ENCODE measurements at regions of chr1 and their contacts with region 1.

Region 1: DNA sequence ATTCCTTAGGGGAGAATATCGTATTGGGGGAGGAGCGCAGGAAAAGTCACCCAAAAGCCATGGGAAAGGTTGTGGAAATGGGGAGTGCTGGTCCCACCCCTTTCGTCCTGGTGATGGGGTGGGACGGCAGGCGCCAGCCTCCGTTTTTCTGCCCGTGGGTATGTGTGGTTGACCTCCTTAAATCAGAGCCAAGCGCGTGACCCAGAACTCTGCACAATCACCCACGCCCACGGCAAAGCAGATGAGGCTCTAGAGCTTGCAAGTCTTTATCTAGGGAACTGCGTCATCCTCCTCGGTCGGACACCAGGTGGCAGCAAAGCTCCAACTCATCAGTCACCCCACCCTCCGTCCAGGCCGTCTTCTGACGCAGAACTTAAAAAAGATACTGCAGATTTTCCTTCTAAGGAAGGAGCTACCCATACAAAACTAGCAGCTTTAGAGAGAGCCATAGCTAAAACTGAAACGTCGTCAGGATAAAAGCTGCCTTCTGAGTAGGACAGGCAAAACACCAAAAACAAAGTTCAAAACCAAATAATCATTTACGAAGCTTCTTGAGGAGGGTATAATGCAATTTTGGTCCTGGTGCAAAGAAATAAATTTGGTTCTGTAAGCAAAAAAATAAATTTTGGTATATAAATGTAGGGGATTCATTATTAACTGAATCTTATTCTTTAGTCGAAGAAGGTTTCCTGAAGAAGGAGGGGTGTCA is 62.0 kb downstream of the TBX19 start:
- H3K4me3 Mint-ChIP-seq: peak overlapping the region; percentile 53
- H3K27ac Mint-ChIP-seq: peak overlapping the region; percentile 32
- H3K4me1 Mint-ChIP-seq: peaks cover 28% of the 10 kb centered on the region
- H3K27me3 Mint-ChIP-seq: no peaks in the 10 kb centered on the region

Region 2: GRCh38 chr1:168386949-168387586 is 44.3 kb after region 1 on chr1:
- intact Hi-C with region 1: no loop called
- H3K4me3 Mint-ChIP-seq: peak overlapping the region; percentile 35
- H3K27ac Mint-ChIP-seq: no peak overlapping the region
- H3K4me1 Mint-ChIP-seq: peaks cover 5% of the 10 kb centered on the region
- H3K27me3 Mint-ChIP-seq: peaks cover 9% of the 10 kb centered on the region

Region 3: DNA sequence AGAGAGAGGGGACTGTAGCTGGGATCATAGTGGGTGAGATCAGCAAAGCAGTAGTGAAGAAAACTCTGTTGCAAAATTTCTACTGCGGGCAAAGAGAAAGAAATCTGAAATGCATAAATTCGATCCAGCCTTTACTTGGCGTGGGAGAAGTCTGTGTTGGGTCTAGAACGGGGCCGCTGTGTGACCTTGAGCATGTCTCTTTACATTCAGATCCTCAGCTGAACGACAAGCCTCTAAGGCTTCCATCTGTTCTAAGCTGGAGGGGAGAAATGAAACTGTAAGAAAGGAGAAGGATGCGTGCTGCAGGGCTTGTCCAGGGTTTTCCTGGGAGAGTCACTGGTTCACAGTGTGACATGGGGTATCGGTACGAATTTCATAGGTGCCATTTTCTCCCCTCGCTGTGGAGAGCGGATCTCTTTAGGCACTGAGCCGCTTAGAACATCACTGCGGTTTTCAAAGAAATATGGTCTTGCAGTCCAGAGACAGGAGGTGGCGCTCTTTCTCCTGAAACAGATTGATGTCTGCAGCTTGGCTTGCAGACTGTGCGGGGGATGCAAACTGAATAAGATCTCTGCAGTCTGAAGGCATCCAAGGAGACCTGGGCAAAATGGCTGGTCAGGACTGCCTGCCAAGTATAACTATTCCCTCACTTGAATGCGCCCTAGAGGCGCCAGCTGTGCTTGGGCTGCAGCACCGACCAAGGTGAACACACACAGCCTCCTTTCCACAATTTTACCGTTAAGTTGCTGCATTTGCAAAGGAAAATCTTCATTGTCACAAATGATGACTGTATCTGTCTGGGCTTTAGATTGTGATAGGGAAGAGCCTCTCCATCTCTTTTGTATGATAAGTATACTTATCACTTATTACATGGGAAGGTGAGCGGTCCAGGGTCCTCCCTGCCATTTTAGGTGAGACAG is 97.0 kb after region 1 on chr1:
- intact Hi-C with region 1: loop called (anchors 1 kb)
- H3K4me3 Mint-ChIP-seq: peak overlapping the region; percentile 45
- H3K27ac Mint-ChIP-seq: no peak overlapping the region
- H3K4me1 Mint-ChIP-seq: peaks cover 11% of the 10 kb centered on the region
- H3K27me3 Mint-ChIP-seq: no peaks in the 10 kb centered on the region

Region 4: GRCh38 chr1:168572633-168573032 is 229.9 kb after region 1 on chr1:
- intact Hi-C with region 1: loop called (anchors 2 kb)
- H3K4me3 Mint-ChIP-seq: no peak overlapping the region
- H3K27ac Mint-ChIP-seq: no peak overlapping the region
- H3K4me1 Mint-ChIP-seq: no peaks in the 10 kb centered on the region
- H3K27me3 Mint-ChIP-seq: no peaks in the 10 kb centered on the region

Region 5: DNA sequence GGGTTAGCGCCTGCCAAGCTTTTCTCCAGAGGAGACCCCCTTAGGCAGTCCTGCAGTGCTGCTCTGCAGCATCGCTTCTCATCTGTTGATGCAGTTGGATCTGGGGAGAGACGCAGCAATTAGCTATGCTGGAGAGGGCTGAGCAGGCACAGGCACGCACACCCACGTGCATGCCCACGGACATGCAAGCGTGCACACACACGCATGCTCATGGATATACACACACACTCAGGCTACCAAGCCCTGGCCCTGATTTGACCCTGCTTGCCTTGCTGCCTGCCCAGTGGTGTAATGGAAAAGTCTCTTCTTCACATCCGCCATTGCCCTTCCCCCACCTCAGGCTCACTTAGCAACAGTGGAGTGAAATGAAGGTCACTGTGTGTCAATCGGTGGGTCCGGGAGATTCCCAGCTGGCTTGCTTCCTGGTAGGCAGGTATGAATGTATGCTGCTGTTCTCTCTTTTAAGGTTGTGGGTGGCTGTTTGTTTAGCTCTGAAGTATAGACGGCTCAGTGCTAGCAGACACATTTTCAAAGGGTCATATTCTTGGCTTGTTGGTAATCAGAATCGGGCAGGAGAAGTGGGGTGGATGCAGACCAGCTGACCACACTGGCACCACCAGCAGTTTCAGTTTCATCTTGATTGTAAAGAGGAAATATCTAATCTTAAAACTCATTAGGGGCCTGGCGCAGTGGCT is 773.3 kb after region 1 on chr1:
- intact Hi-C with region 1: loop called (anchors 10 kb)
- H3K4me3 Mint-ChIP-seq: peak overlapping the region; percentile 53
- H3K27ac Mint-ChIP-seq: peak overlapping the region; percentile 87
- H3K4me1 Mint-ChIP-seq: peaks cover 59% of the 10 kb centered on the region
- H3K27me3 Mint-ChIP-seq: no peaks in the 10 kb centered on the region

Region 6: GRCh38 chr1:169348383-169349036 is 1005.8 kb after region 1 on chr1:
- intact Hi-C with region 1: loop called (anchors 5 kb)
- H3K4me3 Mint-ChIP-seq: no peak overlapping the region
- H3K27ac Mint-ChIP-seq: no peak overlapping the region
- H3K4me1 Mint-ChIP-seq: no peaks in the 10 kb centered on the region
- H3K27me3 Mint-ChIP-seq: no peaks in the 10 kb centered on the region